Common myeloid progenitor, CD34-positive (primary cell): ENCODE measurements at regions of chr1 and their contacts with region 1.

Region 1: GRCh38 chr1:93616996-93617669 is 64.5 kb downstream of the BCAR3 start:
- DNase-seq: peak; percentile 29 to 73 (median 68)
- H3K4me3 ChIP-seq: no peak overlapping the region
- H3K27ac ChIP-seq: no peak overlapping the region
- H3K4me1 ChIP-seq: peaks cover 0 to 10% (median 9%) of the 10 kb centered on the region in 4 experiments
- H3K27me3 ChIP-seq: no peaks in the 10 kb centered on the region

Region 2: GRCh38 chr1:93304716-93305138 is 312.4 kb before region 1 on chr1:
- CTCF ChIA-PET with region 1: interaction called, 16 read pairs
- POLR2A ChIA-PET with region 1: no interaction called
- DNase-seq: peak; percentile 61 to 84 (median 77)
- H3K4me3 ChIP-seq: no peak overlapping the region
- H3K27ac ChIP-seq: no peak overlapping the region
- H3K4me1 ChIP-seq: no peaks in the 10 kb centered on the region
- H3K27me3 ChIP-seq: no peaks in the 10 kb centered on the region

Region 3: GRCh38 chr1:93437976-93438605 is 179.0 kb before region 1 on chr1:
- CTCF ChIA-PET with region 1: interaction called, 46 read pairs
- POLR2A ChIA-PET with region 1: no interaction called
- DNase-seq: peak; percentile 49 to 81 (median 78)
- H3K4me3 ChIP-seq: no peak overlapping the region
- H3K27ac ChIP-seq: no peak overlapping the region
- H3K4me1 ChIP-seq: no peaks in the 10 kb centered on the region
- H3K27me3 ChIP-seq: peaks cover 0 to 3% (median 0%) of the 10 kb centered on the region in 5 experiments

Region 4: DNA sequence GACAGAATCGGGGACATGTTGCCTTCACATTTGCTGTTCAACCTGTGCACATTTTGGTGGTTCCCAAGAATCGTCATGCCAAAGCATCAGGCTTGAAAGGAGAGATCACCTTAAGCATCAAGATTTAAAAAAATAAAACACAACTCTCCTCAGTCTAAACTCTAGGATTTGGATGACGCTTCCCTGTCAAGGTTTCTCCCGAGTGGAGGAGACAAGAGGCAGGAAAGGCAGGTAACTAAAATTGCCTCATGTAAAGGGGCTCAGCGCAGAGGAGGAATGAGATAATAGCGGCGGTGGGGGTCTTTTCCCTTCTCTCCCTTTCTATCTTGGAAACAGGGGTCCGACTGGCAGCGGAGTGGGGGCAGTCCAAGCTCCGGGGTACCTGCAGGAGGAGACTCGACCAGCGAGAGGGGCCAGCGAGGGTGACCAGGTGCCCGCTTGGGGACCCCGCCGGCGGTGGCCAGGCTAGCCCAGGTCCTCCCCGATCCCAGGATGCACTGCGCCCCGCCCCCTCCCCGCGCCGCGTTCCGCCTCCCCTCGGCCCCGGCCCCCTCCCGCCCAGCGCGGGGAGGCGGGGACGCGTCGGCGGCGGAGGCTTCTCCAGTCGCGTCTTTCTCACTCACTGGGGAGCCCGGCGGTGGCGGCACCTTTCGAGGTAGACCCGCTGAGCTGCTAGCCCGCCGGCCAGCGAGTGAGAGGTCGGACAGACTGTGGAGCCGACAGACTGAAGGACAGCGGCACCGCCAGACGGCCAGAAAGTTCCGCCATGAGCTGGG is 169.4 kb before region 1 on chr1 and contains the start of gene FNBP1L:
- CTCF ChIA-PET with region 1: interaction called, 11 read pairs
- POLR2A ChIA-PET with region 1: no interaction called
- DNase-seq: peak; percentile 73 to 87 (median 81)
- H3K4me3 ChIP-seq: peak within 1 kb of the TSS; percentile 58 to 98 (median 91)
- H3K27ac ChIP-seq: peak within 1 kb of the TSS in 1 of 2 experiments; percentile 81
- H3K4me1 ChIP-seq: peaks cover 10 to 26% (median 17%) of the 10 kb centered on the region in 4 experiments
- H3K27me3 ChIP-seq: no peaks in the 10 kb centered on the region

Region 5: GRCh38 chr1:93597709-93598108 is 19.4 kb before region 1 on chr1:
- CTCF ChIA-PET with region 1: no interaction called
- POLR2A ChIA-PET with region 1: no interaction called
- DNase-seq: no peak
- H3K4me3 ChIP-seq: no peak overlapping the region
- H3K27ac ChIP-seq: no peak overlapping the region
- H3K4me1 ChIP-seq: peaks cover 0 to under 1% (median 0%) of the 10 kb centered on the region in 4 experiments
- H3K27me3 ChIP-seq: no peaks in the 10 kb centered on the region

Region 6: DNA sequence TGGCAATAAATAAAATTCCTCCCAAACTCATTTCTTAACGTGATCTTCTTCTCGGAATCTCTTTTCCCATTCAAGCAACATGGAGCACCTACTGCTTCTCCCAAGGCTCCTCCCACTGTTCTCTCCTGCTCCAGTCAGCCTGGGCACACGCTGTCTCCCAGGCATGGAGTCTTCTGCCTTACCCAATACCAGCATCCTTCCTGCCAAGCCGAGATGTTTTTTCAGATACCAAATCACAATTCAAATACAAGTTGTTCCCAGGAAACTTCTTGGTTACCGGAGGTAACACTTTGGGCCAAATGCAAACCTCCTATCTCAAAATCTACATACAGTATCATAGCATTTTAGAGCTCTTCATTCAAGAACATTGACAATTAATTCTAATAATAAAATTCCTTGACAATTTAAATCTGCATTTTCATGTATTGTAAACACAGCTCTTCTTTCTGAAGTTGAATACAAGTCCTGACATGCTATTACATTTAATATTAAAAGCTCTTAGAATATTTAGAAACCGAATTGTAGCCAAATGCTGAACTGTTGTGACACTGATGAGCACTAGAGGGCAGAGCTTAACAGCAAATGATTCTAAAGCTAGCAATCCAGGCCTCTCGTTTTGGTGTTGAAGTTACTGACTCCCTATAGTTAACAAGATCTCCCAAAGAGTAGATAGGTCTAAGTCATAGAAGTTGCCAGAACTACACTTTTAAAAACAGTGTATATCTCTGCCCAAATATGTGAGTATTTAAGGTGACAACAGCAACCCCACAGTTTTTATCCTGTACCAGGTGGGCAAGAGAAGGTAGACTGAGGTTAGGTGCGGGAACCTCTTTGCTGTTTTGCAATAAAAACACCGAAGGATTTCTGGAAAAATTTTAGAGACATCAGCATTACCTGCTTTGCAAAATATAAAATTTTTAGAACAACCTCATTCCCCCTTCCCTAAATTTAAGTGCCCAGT is 12.2 kb after region 1 on chr1:
- CTCF ChIA-PET with region 1: interaction called, 20 read pairs
- POLR2A ChIA-PET with region 1: no interaction called
- DNase-seq: peak; percentile 76 to 88 (median 82)
- H3K4me3 ChIP-seq: no peak overlapping the region
- H3K27ac ChIP-seq: no peak overlapping the region
- H3K4me1 ChIP-seq: no peaks in the 10 kb centered on the region
- H3K27me3 ChIP-seq: no peaks in the 10 kb centered on the region